B cell (primary cell): ENCODE measurements at regions of chr5 and their contacts with region 1.

Region 1: GRCh38 chr5:68215208-68215897 is at the start of gene PIK3R1:
- DNase-seq: peak; percentile 97
- ATAC-seq: peak; percentile 84
- H3K4me3 ChIP-seq: peak within 1 kb of the TSS; percentile 76 to 94 (median 88)
- H3K4me3 Mint-ChIP-seq: peak within 1 kb of the TSS; percentile 85
- H3K27ac ChIP-seq: peak within 1 kb of the TSS; percentile 90 to 92
- H3K27ac Mint-ChIP-seq: peak within 1 kb of the TSS; percentile 98
- H3K4me1 ChIP-seq: peaks cover 22 to 24% of the 10 kb centered on the region in 2 donors
- H3K4me1 Mint-ChIP-seq: peaks cover 44% of the 10 kb centered on the region
- H3K27me3 ChIP-seq: no peaks in the 10 kb centered on the region
- H3K27me3 Mint-ChIP-seq: no peaks in the 10 kb centered on the region
- CTCF ChIP-seq: peak; percentile 40
- total RNA-seq, gene PIK3R1: 63.8 and 73.3 TPM in 2 replicates

Region 2: DNA sequence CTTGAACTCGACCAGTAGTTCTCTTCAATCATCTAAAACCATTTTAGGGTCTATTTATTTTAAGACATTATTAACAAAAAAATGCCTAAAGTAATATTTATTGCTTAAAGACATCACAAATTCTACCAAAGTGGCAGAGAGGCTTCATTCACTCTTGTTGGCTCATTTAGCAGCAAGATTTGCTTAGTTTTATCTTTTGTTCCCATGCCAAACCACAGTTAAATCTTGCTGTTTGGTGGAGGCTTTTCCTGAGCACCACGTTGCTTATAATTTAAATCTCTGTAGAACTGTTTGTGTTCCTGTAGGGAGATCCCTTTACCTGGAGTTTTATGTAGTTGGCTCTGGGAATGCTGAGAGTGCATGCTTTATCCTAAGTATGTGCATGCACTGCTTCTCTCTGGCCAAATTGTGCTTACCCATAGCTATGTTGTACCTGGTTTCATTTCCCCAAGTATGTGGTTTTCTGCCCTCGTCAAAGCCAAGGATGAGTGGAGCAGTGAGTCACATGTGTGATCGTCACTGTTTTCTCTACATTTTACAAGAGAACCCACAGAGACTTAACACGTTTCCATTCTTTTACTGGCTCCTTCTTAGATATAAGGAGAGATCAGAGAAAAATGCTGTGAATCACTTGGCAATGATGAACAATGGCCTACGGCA is 1661.3 kb before region 1 on chr5:
- CTCF ChIA-PET with region 1: no interaction called
- POLR2A ChIA-PET with region 1: no interaction called
- intact Hi-C with region 1: loop called (anchors 10 kb)
- DNase-seq: peak; percentile 93
- ATAC-seq: peak; percentile 94
- H3K4me3 ChIP-seq: peak overlapping the region in 1 of 5 experiments; percentile 1
- H3K4me3 Mint-ChIP-seq: peak overlapping the region; percentile 65
- H3K27ac ChIP-seq: peak overlapping the region; percentile 69 to 75
- H3K27ac Mint-ChIP-seq: peak overlapping the region; percentile 93
- H3K4me1 ChIP-seq: peaks cover 28 to 34% of the 10 kb centered on the region in 2 donors
- H3K4me1 Mint-ChIP-seq: peaks cover 39% of the 10 kb centered on the region
- H3K27me3 ChIP-seq: peaks cover 0 to 2% (median 0%) of the 10 kb centered on the region in 4 experiments
- H3K27me3 Mint-ChIP-seq: no peaks in the 10 kb centered on the region
- CTCF ChIP-seq: no peak

Region 3: DNA sequence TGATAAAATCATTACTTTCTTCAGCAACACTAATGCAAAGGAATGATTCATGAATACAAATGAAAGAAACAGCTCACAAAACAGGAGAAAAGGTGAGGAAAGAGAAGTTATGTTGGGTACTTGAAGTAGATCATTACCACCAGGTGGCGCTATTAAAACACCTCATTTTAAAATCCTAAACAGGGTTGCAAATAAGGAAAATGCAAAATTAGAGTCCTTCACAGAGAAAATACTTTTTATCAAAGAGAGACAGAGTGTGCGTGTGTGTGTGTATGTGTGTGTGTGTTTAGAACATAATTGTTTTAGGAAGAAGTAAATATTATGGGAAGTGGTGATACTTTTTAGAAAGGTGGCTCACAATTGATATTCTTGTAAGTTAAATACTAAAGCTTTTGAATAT is 969.2 kb before region 1 on chr5:
- CTCF ChIA-PET with region 1: interaction called, 12 read pairs
- POLR2A ChIA-PET with region 1: no interaction called
- intact Hi-C with region 1: no loop called
- DNase-seq: peak; percentile 78
- ATAC-seq: peak; percentile 31
- H3K4me3 ChIP-seq: no peak overlapping the region
- H3K4me3 Mint-ChIP-seq: no peak overlapping the region
- H3K27ac ChIP-seq: no peak overlapping the region
- H3K27ac Mint-ChIP-seq: no peak overlapping the region
- H3K4me1 ChIP-seq: peaks cover 5 to 8% of the 10 kb centered on the region in 2 donors
- H3K4me1 Mint-ChIP-seq: peaks cover 5% of the 10 kb centered on the region
- H3K27me3 ChIP-seq: no peaks in the 10 kb centered on the region
- H3K27me3 Mint-ChIP-seq: no peaks in the 10 kb centered on the region
- CTCF ChIP-seq: peak; percentile 93

Region 4: DNA sequence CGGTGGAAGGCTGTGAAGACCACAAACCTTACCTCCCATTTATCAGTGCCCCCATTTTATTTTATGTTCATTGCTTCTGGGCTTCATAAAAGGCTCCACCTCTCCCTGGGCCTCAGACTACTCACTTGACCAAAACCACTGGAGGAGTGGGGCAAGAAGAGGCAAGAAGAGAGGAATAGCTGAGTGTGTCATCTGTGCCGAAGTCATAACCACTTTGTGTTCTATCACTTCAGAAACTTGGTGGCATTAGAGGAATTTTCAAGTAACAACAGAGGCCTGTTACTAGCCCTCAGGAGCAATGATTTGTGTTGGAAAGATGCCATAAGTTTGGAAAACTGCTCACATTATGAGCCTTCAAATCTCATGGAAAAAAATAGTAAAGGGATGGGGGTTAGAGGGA is 88.5 kb before region 1 on chr5:
- CTCF ChIA-PET with region 1: no interaction called
- POLR2A ChIA-PET with region 1: no interaction called
- intact Hi-C with region 1: no loop called
- DNase-seq: no peak
- ATAC-seq: no peak
- H3K4me3 ChIP-seq: no peak overlapping the region
- H3K4me3 Mint-ChIP-seq: no peak overlapping the region
- H3K27ac ChIP-seq: no peak overlapping the region
- H3K27ac Mint-ChIP-seq: no peak overlapping the region
- H3K4me1 ChIP-seq: no peaks in the 10 kb centered on the region
- H3K4me1 Mint-ChIP-seq: no peaks in the 10 kb centered on the region
- H3K27me3 ChIP-seq: peaks cover 0 to 6% (median 0%) of the 10 kb centered on the region in 4 experiments
- H3K27me3 Mint-ChIP-seq: peaks cover 9% of the 10 kb centered on the region
- CTCF ChIP-seq: no peak

Region 5: GRCh38 chr5:68182534-68182933 is 32.8 kb before region 1 on chr5:
- CTCF ChIA-PET with region 1: interaction called, 4 read pairs
- POLR2A ChIA-PET with region 1: no interaction called
- intact Hi-C with region 1: loop called (anchors 5 kb)
- DNase-seq: no peak
- ATAC-seq: no peak
- H3K4me3 ChIP-seq: no peak overlapping the region
- H3K4me3 Mint-ChIP-seq: no peak overlapping the region
- H3K27ac ChIP-seq: no peak overlapping the region
- H3K27ac Mint-ChIP-seq: no peak overlapping the region
- H3K4me1 ChIP-seq: peaks cover 0 to 3% of the 10 kb centered on the region in 2 donors
- H3K4me1 Mint-ChIP-seq: peaks cover 4% of the 10 kb centered on the region
- H3K27me3 ChIP-seq: no peaks in the 10 kb centered on the region
- H3K27me3 Mint-ChIP-seq: no peaks in the 10 kb centered on the region
- CTCF ChIP-seq: no peak

Region 6: DNA sequence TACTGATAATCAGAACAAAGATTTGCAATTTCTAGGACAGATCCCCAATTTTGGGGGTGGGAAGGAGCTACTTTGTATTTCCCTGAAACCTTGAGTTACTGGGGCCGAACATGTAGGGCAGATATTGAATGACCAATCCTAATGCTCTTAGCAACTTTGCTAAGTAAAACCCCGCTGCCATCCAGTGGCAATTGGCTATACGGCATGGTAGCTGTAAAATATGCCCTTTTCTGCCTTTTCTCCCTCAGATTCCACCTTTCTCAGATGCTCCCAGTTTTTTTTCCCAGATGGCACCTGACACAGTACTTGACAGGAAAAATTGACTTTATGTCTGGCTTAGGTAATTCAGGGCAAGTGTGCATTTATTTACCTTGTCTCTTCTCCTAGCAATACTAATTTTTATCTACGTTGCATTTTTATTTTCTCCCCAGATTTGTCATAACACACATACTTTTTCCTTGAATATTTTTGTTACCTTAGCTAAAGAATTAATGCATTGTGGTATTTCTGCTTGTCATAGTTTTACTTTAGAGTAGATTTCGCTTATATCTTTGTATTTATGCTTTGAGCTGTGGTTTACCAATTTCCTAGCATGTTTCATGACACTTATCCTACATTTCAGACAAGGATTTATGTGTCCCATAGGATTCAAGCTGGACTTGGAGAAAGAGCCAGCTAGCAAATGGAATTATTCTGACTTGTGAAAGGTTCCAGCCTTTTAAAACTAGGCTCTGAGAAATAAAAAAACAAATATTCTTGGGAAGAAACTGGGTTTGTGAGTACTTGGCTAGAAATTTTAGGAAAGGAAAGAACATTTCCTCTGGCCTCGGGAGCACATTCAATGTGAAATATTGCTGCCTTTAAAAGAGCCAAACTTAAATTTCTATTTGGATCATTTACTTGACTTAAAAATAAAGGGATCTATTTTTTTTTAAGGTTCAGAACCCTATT is 37.6 kb after region 1 on chr5:
- CTCF ChIA-PET with region 1: interaction called, 9 read pairs
- POLR2A ChIA-PET with region 1: interaction called, 3 read pairs
- intact Hi-C with region 1: loop called (anchors 5 kb)
- DNase-seq: peak; percentile 65
- ATAC-seq: peak; percentile 65
- H3K4me3 ChIP-seq: no peak overlapping the region
- H3K4me3 Mint-ChIP-seq: no peak overlapping the region
- H3K27ac ChIP-seq: no peak overlapping the region
- H3K27ac Mint-ChIP-seq: no peak overlapping the region
- H3K4me1 ChIP-seq: peaks cover 38% of the 10 kb centered on the region in 2 donors
- H3K4me1 Mint-ChIP-seq: peaks cover 78% of the 10 kb centered on the region
- H3K27me3 ChIP-seq: no peaks in the 10 kb centered on the region
- H3K27me3 Mint-ChIP-seq: no peaks in the 10 kb centered on the region
- CTCF ChIP-seq: peak; percentile 84

Region 7: GRCh38 chr5:68433923-68434879 is 218.8 kb after region 1 on chr5:
- CTCF ChIA-PET with region 1: no interaction called
- POLR2A ChIA-PET with region 1: no interaction called
- intact Hi-C with region 1: loop called (anchors 1 kb)
- DNase-seq: peak; percentile 84
- ATAC-seq: peak; percentile 97
- H3K4me3 ChIP-seq: peak overlapping the region in 4 of 5 experiments; percentile 12 to 29 (median 14)
- H3K4me3 Mint-ChIP-seq: peak overlapping the region; percentile 78
- H3K27ac ChIP-seq: peak overlapping the region; percentile 50 to 64
- H3K27ac Mint-ChIP-seq: peak overlapping the region; percentile 89
- H3K4me1 ChIP-seq: peaks cover 28 to 30% of the 10 kb centered on the region in 2 donors
- H3K4me1 Mint-ChIP-seq: peaks cover 33% of the 10 kb centered on the region
- H3K27me3 ChIP-seq: no peaks in the 10 kb centered on the region
- H3K27me3 Mint-ChIP-seq: no peaks in the 10 kb centered on the region
- CTCF ChIP-seq: no peak